ENCODE measurements at regions of chr10 and their contacts with region 1.

Region 1: DNA sequence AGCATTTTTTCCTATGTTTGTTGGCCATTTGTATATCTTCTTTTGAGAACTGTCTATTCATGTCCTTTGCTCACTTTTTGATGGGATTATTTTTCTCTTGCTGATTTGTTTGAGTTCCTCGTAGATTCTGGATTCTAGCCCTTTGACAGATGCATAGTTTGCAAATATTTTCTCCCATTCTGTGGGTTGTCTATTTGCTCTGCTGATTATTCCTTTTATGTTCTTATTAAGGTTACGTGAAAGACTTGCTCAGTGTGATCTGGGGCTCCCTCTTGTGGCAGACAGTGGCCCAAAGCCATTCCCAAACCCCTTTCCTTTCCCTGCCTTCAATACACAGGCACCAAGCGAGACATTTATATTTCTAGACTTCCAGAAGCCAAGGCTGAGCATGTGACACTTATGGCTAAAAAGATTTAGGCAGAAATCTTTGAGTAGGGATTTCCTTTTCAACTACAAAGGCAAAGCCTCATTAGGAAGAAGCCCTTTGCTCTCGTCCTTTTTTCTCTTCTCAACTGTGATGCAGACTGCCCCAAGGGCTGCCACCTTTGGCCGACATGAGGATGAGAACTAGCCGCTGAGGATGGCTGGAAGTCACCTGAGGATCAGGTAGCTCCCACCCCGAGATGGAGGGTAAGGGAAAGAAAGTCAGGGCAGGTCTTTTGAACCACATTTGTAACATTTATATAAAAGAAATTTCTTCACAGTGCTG is 23.6 kb downstream of the ST8SIA6 start:
- DNase-seq: no peak
- ATAC-seq: peak; percentile 72
- H3K4me3 ChIP-seq: no peak overlapping the region
- H3K27ac ChIP-seq: no peak overlapping the region
- H3K4me1 ChIP-seq: peaks cover 12% of the 10 kb centered on the region; the same call in 1 of the 2 replicates
- H3K27me3 ChIP-seq: peaks cover 0 to 7% of the 10 kb centered on the region in 2 experiments; a peak in 1 of 4 replicates
- CTCF ChIP-seq: peak; percentile 74 to 84 (median 75)
- EP300 ChIP-seq: no peak
- POLR2A ChIP-seq: no peak
- RAD21 ChIP-seq: peak; percentile 64

Region 2: GRCh38 chr10:16843252-16843870 is 587.4 kb before region 1 on chr10:
- CTCF ChIA-PET with region 1: no interaction called
- POLR2A ChIA-PET with region 1: no interaction called
- RAD21 ChIA-PET with region 1: no interaction called
- SMC1A ChIA-PET with region 1: no interaction called
- in situ Hi-C with region 1: no loop called
- intact Hi-C with region 1: loop called (anchors 5 kb)
- DNase-seq: peak; percentile 12
- ATAC-seq: peak; percentile 78
- H3K4me3 ChIP-seq: no peak overlapping the region
- H3K27ac ChIP-seq: no peak overlapping the region
- H3K4me1 ChIP-seq: no peaks in the 10 kb centered on the region
- H3K27me3 ChIP-seq: no peaks in the 10 kb centered on the region; a peak in 1 of 4 replicates
- CTCF ChIP-seq: peak; percentile 6 to 59 (median 58); a peak in 5 of 6 replicates
- EP300 ChIP-seq: no peak
- POLR2A ChIP-seq: no peak
- RAD21 ChIP-seq: peak; percentile 68

Region 3: DNA sequence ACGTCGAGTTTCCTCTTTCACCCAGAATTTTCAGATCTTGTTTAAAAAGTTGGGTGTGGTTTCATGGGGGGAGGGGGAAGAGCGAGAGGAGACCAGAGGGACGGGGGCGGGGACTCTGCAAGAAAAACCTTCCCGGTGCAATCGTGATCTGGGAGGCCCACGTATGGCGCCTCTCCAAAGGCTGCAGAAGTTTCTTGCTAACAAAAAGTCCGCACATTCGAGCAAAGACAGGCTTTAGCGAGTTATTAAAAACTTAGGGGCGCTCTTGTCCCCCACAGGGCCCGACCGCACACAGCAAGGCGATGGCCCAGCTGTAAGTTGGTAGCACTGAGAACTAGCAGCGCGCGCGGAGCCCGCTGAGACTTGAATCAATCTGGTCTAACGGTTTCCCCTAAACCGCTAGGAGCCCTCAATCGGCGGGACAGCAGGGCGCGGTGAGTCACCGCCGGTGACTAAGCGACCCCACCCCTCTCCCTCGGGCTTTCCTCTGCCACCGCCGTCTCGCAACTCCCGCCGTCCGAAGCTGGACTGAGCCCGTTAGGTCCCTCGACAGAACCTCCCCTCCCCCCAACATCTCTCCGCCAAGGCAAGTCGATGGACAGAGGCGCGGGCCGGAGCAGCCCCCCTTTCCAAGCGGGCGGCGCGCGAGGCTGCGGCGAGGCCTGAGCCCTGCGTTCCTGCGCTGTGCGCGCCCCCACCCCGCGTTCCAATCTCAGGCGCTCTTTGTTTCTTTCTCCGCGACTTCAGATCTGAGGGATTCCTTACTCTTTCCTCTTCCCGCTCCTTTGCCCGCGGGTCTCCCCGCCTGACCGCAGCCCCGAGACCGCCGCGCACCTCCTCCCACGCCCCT is 202.5 kb before region 1 on chr10 and contains the start of gene VIM:
- CTCF ChIA-PET with region 1: no interaction called
- POLR2A ChIA-PET with region 1: no interaction called
- RAD21 ChIA-PET with region 1: no interaction called
- SMC1A ChIA-PET with region 1: no interaction called
- in situ Hi-C with region 1: no loop called
- intact Hi-C with region 1: no loop called
- DNase-seq: peak; percentile 69
- ATAC-seq: peak; percentile 54
- H3K4me3 ChIP-seq: peak within 1 kb of the TSS; percentile 78
- H3K27ac ChIP-seq: peak within 1 kb of the TSS; percentile 64
- H3K4me1 ChIP-seq: peaks cover 32% of the 10 kb centered on the region
- H3K27me3 ChIP-seq: no peaks in the 10 kb centered on the region; a peak in 1 of 4 replicates
- CTCF ChIP-seq: no peak
- EP300 ChIP-seq: peak in 1 of 2 experiments; percentile 45; a peak in 1 of 4 replicates
- POLR2A ChIP-seq: peak; percentile 53
- RAD21 ChIP-seq: no peak
- polyA plus RNA-seq, gene VIM: 44.2 to 115 TPM

Region 4: GRCh38 chr10:17409170-17409733 is 21.5 kb before region 1 on chr10:
- CTCF ChIA-PET with region 1: interaction called, 10 read pairs
- POLR2A ChIA-PET with region 1: no interaction called
- RAD21 ChIA-PET with region 1: interaction called, 5 read pairs
- SMC1A ChIA-PET with region 1: interaction called, 9 read pairs
- in situ Hi-C with region 1: no loop called
- intact Hi-C with region 1: no loop called
- DNase-seq: no peak
- ATAC-seq: peak; percentile 54; the same call in 2 of the 3 replicates
- H3K4me3 ChIP-seq: no peak overlapping the region
- H3K27ac ChIP-seq: no peak overlapping the region
- H3K4me1 ChIP-seq: no peaks in the 10 kb centered on the region
- H3K27me3 ChIP-seq: no peaks in the 10 kb centered on the region
- CTCF ChIP-seq: peak; percentile 40 to 50 (median 50)
- EP300 ChIP-seq: no peak
- POLR2A ChIP-seq: no peak
- RAD21 ChIP-seq: peak; percentile 47